Aorta (tissue), 5 donors: ENCODE measurements at regions of chr10 and their contacts with region 1.

Region 1: GRCh38 chr10:58201704-58202103 is 66.0 kb downstream of the IPMK start:
- DNase-seq: no peak
- ATAC-seq: no peak
- H3K4me3 ChIP-seq: no peak overlapping the region
- H3K27ac ChIP-seq: no peak overlapping the region
- H3K4me1 ChIP-seq: no peaks in the 10 kb centered on the region
- H3K27me3 ChIP-seq: no peaks in the 10 kb centered on the region

Region 2: DNA sequence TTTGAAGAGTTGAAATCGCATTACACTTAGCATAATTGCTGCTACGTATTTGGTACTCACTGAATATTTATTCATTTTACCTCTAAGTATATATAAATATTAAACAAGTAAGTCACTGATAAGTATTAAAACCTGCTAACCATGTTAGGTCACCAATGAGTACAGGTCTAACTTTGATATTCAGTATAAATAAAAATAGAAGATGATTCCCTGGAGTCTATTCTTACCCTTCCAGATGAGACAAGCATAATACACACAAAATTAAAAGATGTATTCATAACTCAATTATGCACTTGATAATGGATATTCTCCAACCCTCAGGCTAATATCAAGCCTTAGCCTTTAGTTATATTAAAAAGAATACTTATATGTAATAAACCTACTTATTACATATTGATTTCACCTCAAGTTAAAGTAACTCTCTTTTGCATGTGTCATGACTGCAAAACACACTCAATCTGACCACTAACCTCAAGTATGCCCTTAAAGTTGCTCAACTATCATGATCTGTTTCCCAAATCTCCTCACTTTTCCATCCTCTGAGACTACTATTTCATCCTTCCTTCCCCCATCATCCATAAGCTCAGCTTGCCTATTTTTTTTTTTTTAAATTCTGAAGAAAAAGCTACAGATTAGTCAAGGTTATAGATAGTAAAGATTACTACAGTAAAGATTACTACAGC is 19.2 kb after region 1 on chr10:
- intact Hi-C with region 1: loop called in 1 of 2 experiments (anchors 1 kb)
- DNase-seq: no peak
- ATAC-seq: no peak
- H3K4me3 ChIP-seq: no peak overlapping the region
- H3K27ac ChIP-seq: no peak overlapping the region
- H3K4me1 ChIP-seq: no peaks in the 10 kb centered on the region
- H3K27me3 ChIP-seq: no peaks in the 10 kb centered on the region

Region 3: DNA sequence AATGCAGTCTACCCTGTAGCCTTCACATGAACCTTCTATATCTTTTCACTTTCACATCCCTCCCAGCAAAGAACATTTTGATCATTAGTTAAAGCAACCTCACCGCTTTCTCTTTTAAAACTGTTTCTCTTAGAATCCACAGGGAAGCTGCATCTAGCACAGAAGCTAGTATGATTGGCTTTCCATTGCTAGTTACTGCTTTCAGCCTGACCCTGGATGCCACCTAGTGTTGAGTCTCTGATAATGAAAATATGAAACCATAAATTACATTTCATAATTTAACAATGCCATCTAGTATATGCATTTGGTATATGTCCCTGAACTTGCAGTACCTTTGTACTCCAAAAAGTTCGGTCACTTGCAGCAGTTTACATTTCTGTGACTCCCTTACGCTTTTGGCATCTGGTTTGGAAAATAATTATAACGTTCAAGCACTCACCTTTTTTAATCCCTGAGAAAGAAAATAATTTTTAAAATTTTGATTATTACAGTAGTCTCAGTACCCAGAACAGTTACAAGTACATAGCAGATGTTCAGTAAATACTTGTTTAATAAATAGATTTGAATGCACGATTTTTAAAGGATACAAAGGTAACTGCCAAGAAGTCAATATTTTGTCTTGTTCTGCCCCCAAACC is 90.0 kb after region 1 on chr10:
- intact Hi-C with region 1: no loop called
- DNase-seq: no peak
- ATAC-seq: peak; percentile 74
- H3K4me3 ChIP-seq: no peak overlapping the region
- H3K27ac ChIP-seq: no peak overlapping the region
- H3K4me1 ChIP-seq: no peaks in the 10 kb centered on the region
- H3K27me3 ChIP-seq: no peaks in the 10 kb centered on the region